ENCODE measurements at regions of chr2 and their contacts with region 1.

Region 1: GRCh38 chr2:166539340-166540162 is 45.5 kb upstream of the SCN7A start:
- DNase-seq: peak; percentile 1
- H3K4me3 Mint-ChIP-seq: no peak overlapping the region
- H3K27ac Mint-ChIP-seq: no peak overlapping the region
- H3K4me1 Mint-ChIP-seq: peaks cover 5% of the 10 kb centered on the region
- H3K27me3 Mint-ChIP-seq: no peaks in the 10 kb centered on the region

Region 2: GRCh38 chr2:167212014-167212648 is 672.6 kb after region 1 on chr2:
- intact Hi-C with region 1: loop called (anchors 1 kb)
- DNase-seq: no peak
- H3K4me3 Mint-ChIP-seq: no peak overlapping the region
- H3K27ac Mint-ChIP-seq: no peak overlapping the region
- H3K4me1 Mint-ChIP-seq: no peaks in the 10 kb centered on the region
- H3K27me3 Mint-ChIP-seq: no peaks in the 10 kb centered on the region